RWPE1 (cell line): ENCODE measurements at regions of chr20 and their contacts with region 1.

Region 1: DNA sequence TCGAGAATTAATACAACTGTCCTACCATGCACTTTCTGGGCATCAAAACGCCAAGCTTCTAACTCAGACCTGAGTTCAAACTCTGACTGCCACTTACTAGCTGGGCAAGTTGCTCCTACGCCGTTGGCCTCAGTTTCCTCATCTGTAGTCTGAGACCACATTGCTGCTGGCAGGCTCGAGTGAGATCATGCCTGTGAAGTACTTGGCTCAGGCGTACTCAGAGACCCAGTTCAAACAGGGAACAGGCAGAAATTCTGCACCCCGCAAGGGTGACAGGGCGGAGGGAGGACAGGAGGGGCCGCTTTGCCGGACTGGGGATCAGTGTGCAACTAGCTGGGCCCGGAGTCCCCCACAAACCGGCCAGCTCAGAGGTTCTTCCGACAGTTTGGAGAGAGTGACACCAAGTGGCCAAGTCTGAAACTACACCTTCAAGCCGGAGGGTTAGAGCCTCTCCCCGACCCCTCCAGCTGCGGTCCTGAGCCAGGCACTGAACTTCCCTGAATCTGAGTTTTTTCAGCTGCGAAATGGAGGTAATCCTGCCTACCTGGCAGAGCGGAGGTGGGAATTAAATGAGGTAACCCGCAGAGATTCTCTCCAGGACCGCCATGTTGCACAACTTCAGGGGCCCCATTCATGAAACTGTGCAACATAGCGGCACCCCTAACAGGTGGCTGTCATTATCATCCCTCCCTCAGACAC is 46.0 kb upstream of the PTPN1 start:
- DNase-seq: peak; percentile 76
- H3K27ac ChIP-seq: peak overlapping the region; percentile 48
- CTCF ChIP-seq: peak; percentile 93

Region 2: DNA sequence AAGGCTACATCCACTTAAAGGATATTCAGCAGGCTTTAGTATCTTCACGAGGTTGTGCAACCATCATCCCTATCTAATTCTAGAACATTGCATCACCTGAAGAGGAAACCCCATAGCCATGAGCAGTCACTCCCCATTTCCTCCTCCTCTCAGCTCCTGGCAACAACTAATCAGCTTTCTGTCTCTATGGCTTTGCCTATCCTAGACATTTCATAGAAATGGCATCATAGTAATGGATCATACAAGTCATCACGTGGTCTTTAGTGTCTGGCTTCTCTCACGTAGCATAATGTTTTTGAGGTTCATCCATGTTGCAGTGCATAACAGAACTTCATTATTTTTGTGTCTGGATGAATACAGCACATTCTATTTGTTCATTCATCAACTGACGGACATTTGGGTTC is 460.9 kb before region 1 on chr20:
- CTCF ChIA-PET with region 1: interaction called, 10 read pairs
- POLR2A ChIA-PET with region 1: no interaction called
- DNase-seq: peak; percentile 72
- H3K27ac ChIP-seq: peak overlapping the region; percentile 55
- CTCF ChIP-seq: no peak